Gastrocnemius medialis (tissue), 4 donors: ENCODE measurements at regions of chr21 and their contacts with region 1.

Region 1: DNA sequence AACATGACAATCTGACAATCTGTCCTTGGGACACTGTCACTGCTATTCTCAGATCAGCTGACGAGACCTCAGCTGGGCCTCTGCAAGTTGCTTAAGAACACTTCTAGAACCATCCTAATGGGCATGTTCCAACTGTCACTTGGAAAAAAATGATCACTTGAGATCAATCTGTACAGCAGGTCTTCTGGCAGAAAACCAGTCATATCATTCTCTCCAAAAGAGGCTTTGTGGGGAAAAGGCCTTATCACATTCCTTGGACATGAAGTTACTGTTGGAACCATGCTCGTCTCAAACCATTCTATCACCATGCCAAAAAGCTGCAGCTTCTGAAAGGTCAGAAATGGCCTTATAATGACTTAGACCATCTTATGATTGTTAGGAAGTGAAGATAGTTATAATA is 744.2 kb downstream of the USP25 start:
- DNase-seq: peak in 1 of 2 donors; percentile 26
- ATAC-seq: peak; percentile 26 to 83
- H3K4me3 ChIP-seq: no peak overlapping the region
- H3K27ac ChIP-seq: peak overlapping the region; percentile 38 to 63 (median 48)
- H3K4me1 ChIP-seq: peaks cover 31 to 37% of the 10 kb centered on the region in 2 donors
- H3K27me3 ChIP-seq: no peaks in the 10 kb centered on the region
- CTCF ChIP-seq: no peak
- POLR2A ChIP-seq: no peak

Region 2: DNA sequence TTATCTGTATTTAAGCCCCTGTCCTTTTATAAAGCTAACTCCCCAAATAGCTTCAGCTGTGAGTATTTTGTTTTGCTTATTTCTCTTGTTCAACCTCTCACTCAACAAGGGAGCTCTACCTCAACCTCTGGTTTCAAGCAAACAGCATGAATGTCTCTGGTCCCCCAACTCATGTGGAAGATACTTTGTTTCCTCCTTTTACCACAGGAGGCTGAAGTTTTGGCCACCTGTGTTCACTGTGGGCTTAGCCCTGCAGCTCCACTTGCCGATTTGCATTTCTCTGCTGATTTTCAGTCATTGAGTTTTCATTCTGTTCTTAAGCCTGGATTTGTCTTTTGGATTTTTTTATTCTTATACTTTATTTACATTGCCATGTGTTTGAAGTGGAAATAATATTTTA is 131.1 kb before region 1 on chr21:
- in situ Hi-C with region 1: no loop called
- intact Hi-C with region 1: no loop called
- DNase-seq: no peak
- ATAC-seq: no peak
- H3K4me3 ChIP-seq: no peak overlapping the region
- H3K27ac ChIP-seq: no peak overlapping the region
- H3K4me1 ChIP-seq: no peaks in the 10 kb centered on the region
- H3K27me3 ChIP-seq: no peaks in the 10 kb centered on the region
- CTCF ChIP-seq: no peak
- POLR2A ChIP-seq: no peak

Region 3: GRCh38 chr21:16492892-16493291 is 18.9 kb after region 1 on chr21:
- in situ Hi-C with region 1: no loop called
- intact Hi-C with region 1: loop called (anchors 2 kb)
- DNase-seq: no peak
- ATAC-seq: no peak
- H3K4me3 ChIP-seq: no peak overlapping the region
- H3K27ac ChIP-seq: no peak overlapping the region
- H3K4me1 ChIP-seq: peaks cover 24 to 28% of the 10 kb centered on the region in 2 donors
- H3K27me3 ChIP-seq: no peaks in the 10 kb centered on the region
- CTCF ChIP-seq: no peak
- POLR2A ChIP-seq: no peak

Region 4: GRCh38 chr21:16509476-16509875 is 35.5 kb after region 1 on chr21:
- in situ Hi-C with region 1: no loop called
- intact Hi-C with region 1: loop called (anchors 5 kb)
- DNase-seq: no peak
- ATAC-seq: no peak
- H3K4me3 ChIP-seq: no peak overlapping the region
- H3K27ac ChIP-seq: no peak overlapping the region
- H3K4me1 ChIP-seq: peaks cover 5 to 8% of the 10 kb centered on the region in 2 donors
- H3K27me3 ChIP-seq: no peaks in the 10 kb centered on the region
- CTCF ChIP-seq: no peak
- POLR2A ChIP-seq: no peak